Activated CD8-positive, alpha-beta T cell treated with anti-CD3 and anti-CD28 coated beads for 36 hours (primary cell): ENCODE measurements at regions of chr9 and their contacts with region 1.

Region 1: GRCh38 chr9:121213136-121213806 is 11.6 kb upstream of the RAB14 start:
- DNase-seq: peak; percentile 83
- ATAC-seq: peak; percentile 79
- H3K4me3 Mint-ChIP-seq: no peak overlapping the region
- H3K27ac Mint-ChIP-seq: no peak overlapping the region
- H3K4me1 Mint-ChIP-seq: peaks cover 4% of the 10 kb centered on the region
- H3K27me3 Mint-ChIP-seq: no peaks in the 10 kb centered on the region
- CTCF ChIP-seq: peak; percentile 92

Region 2: DNA sequence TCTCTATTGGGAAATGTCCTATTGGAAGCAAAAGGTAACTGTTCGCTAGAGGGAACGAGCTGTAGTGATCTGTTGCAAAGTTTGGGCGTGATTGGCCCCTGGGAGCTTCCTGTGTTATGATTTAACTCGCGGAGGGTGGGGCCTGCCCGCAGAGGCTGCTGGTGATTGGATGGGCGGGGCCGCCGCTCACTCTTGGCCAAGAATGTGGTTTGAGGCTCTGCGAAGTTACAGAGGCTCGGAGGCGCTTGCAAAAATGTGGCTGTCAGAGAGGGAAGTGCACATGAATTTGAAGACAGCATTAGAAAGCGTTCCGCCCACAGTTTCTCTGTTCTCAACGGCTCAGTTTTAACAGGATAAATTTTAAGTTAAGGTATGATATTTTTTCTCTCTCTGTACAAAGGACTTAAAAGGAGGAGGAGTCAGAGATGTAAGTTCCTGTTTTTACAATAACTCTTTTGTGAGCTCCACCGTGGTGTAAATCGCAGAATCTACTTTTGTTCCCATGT is 91.6 kb before region 1 on chr9:
- CTCF ChIA-PET with region 1: interaction called, 12 read pairs
- POLR2A ChIA-PET with region 1: no interaction called
- intact Hi-C with region 1: no loop called
- DNase-seq: peak; percentile 99
- ATAC-seq: peak; percentile 99
- H3K4me3 Mint-ChIP-seq: peak overlapping the region; percentile 84
- H3K27ac Mint-ChIP-seq: peak overlapping the region; percentile 95
- H3K4me1 Mint-ChIP-seq: peaks cover 47% of the 10 kb centered on the region
- H3K27me3 Mint-ChIP-seq: no peaks in the 10 kb centered on the region
- CTCF ChIP-seq: no peak

Region 3: DNA sequence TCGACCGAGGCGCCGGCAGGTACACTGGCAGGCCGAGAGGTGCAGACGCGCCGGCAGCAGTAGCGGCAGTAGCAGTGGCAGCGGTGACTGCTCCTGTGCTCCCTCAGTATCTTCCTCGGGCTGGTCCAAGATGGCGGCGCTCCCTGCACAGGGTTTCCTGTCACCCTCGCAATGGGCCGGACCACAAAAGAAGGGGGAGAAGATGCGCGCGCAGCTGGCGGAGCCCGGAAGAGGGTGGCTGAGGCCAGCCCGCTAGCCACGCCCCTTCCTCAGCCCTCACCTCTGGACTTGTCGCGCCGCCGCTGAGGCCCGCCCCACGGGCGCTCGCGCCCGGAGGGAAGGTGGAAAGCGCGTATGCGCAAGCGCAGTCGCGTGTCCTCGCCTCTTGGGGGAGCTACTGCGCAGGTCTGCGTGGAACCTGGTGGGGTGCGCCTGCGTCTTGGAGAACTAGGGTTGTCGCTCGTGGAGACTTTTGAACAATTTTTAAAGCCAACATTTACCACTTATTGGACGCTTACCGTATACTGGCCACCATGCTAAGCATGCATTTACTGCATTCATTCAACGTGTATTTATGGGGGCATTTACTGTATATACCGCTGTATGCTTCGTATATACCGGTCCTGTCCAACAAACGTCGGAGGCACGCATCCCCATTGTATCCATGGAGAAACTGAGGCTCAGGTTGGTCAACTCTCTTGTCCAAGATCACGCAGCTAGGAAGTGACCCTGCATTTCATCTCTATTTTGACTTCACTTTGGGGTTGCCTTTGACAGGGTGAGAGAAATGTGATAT is 11.3 kb before region 1 on chr9 and contains the start of gene RAB14:
- CTCF ChIA-PET with region 1: interaction called, 25 read pairs
- POLR2A ChIA-PET with region 1: interaction called, 3 read pairs
- intact Hi-C with region 1: no loop called
- DNase-seq: peak; percentile 100
- ATAC-seq: peak; percentile 96
- H3K4me3 Mint-ChIP-seq: peak within 1 kb of the TSS; percentile 94
- H3K27ac Mint-ChIP-seq: peak within 1 kb of the TSS; percentile 96
- H3K4me1 Mint-ChIP-seq: peaks cover 42% of the 10 kb centered on the region
- H3K27me3 Mint-ChIP-seq: no peaks in the 10 kb centered on the region
- CTCF ChIP-seq: peak; percentile 52
- total RNA-seq, gene RAB14: 54.3 to 55.5 TPM

Region 4: DNA sequence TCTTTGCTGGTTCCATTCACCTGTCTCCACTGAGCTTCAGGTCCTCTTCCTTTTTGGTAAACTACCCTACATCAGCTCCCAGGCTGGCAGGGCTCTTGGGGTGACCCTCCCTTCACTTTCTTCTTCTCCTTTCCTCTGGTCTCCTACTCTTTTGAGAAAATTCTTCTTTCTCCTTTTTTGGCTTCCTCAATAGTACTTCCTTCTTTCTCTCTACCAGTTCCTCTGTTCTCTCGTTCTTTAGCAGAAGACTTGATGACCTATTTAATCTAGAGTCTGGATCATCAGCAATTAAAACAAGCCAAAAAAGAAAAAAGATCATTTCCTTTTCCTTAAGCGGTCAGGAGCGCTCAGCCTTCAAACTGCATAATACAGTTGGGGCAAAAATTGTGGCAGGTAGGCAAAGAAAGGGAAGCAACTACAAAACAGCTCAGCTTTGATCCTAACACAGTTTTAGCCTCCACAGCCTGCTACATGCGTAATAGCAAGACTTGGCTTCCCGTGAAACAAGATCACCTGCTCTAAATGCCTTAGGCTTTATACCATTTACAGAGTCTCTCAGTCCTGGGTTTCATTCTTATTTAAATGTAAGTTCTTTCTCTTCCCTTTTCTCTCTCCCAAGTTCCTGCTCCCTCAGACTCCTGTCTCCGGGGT is 40.7 kb after region 1 on chr9:
- CTCF ChIA-PET with region 1: interaction called, 14 read pairs
- POLR2A ChIA-PET with region 1: interaction called, 3 read pairs
- intact Hi-C with region 1: no loop called
- DNase-seq: no peak
- ATAC-seq: no peak
- H3K4me3 Mint-ChIP-seq: no peak overlapping the region
- H3K27ac Mint-ChIP-seq: no peak overlapping the region
- H3K4me1 Mint-ChIP-seq: no peaks in the 10 kb centered on the region
- H3K27me3 Mint-ChIP-seq: no peaks in the 10 kb centered on the region
- CTCF ChIP-seq: no peak

Region 5: DNA sequence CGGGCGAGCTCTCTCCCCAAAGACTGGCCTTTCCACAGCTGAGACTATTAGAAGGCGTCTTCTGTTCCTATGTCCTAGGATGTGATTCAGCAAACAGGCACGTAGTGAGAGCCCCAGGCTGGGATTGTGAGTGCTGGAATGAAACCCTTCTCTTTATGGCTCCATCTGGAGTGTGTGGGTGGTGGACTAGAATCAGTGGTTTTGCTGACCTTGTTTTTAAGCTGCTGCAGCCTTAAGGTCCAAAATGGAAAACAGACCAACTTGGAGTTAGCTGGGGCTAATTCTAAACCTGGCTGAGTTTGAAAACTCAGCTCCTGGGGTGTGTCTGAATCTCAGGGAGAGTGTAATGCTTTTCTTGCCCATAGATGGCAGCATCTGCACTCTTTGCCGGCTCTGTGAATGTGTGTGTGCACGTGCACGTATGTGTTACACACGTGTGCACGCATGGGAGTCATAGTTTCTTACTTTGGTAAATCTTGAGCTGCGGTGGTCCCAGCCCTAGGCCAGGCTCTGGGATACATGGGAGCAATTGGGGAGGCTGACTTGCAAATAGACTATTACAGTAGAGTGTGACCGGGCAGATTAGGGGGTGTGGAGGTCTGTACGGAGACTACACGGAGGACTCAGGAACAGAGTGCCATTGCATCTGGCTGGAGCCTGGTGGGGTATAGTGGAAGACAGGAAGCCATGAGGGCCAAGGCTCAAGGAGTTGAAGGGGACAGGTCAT is 65.4 kb after region 1 on chr9:
- CTCF ChIA-PET with region 1: interaction called, 16 read pairs
- POLR2A ChIA-PET with region 1: no interaction called
- intact Hi-C with region 1: no loop called
- DNase-seq: peak; percentile 73
- ATAC-seq: peak; percentile 93
- H3K4me3 Mint-ChIP-seq: no peak overlapping the region
- H3K27ac Mint-ChIP-seq: no peak overlapping the region
- H3K4me1 Mint-ChIP-seq: peaks cover 5% of the 10 kb centered on the region
- H3K27me3 Mint-ChIP-seq: no peaks in the 10 kb centered on the region
- CTCF ChIP-seq: peak; percentile 88

Region 6: DNA sequence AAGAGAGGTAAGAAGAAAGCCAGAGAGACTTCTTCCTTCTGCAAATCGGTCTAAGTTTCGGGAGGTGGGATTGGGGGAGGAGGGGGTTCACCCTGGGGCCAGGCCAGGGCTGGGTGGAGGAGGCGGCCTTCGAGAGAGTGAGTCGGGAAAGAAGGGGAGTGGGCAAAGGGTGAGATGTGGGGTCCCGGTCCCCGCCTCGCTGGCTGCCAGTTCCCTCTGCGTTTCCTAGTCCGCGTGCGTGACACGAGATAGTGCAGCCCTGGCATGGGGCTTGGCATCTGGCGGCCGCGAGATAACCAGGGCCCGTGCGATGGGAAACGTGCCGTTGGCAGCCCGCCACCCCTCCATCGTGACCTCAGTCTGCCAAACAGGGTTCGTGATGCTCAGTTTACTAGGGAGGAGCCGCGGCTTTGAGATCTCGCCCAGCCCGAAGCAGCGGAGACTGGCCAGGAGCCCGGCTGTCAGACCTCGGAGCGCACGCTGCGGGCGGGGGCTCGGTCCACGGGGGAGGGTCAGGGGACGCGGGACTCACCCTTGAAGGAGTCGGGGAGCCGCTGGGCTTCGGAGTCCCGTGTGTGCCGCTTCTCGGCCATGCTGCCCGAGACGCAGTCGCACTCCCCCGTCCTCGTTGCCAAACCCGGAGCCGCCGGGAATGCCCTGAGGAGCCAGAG is 156.5 kb after region 1 on chr9 and contains the start of gene STOM:
- CTCF ChIA-PET with region 1: no interaction called
- POLR2A ChIA-PET with region 1: no interaction called
- intact Hi-C with region 1: loop called (anchors 10 kb)
- DNase-seq: peak; percentile 79
- ATAC-seq: peak; percentile 65
- H3K4me3 Mint-ChIP-seq: peak within 1 kb of the TSS; percentile 79
- H3K27ac Mint-ChIP-seq: peak within 1 kb of the TSS; percentile 91
- H3K4me1 Mint-ChIP-seq: peaks cover 57% of the 10 kb centered on the region
- H3K27me3 Mint-ChIP-seq: no peaks in the 10 kb centered on the region
- CTCF ChIP-seq: no peak
- total RNA-seq, gene STOM: 31.7 to 32.5 TPM